ENCODE measurements at regions of chr17 and their contacts with region 1.

Region 1: DNA sequence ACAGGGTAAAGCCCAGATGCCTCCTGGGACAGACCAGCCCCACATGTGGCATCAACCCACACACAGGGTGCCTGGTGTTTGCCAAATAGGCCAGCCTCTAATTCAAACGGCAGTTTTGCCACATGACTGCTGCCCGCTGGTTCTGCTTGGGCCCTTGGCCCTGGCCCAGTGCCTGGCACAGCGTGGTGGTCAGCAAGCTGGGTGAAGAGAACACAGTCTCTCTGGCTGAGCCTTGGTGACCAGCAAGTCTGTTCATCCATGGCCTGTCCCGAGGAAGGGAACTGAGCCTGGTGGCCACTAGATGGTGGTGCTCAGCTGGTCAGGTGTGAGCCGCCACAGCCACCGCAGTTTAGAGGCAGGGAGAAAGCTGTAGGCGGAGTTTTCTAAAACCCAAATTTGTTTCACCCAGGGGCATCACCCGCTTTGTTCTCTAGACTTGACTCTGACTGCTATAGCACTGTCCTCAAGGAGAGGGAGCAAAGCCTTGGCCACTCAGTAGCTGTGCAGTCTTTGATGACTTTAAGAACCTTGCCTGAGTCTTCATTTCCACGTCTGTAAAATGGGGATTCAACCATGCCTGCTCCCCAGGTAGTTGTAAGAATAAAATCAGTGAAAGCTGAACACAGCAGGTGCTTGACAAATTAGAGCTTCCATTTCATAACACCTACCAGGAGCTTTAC is 4.7 kb upstream of the GFAP start:
- DNase-seq: peak; percentile 78 to 79
- H3K4me3 ChIP-seq: no peak overlapping the region
- H3K27ac ChIP-seq: no peak overlapping the region
- H3K4me1 ChIP-seq: no peaks in the 10 kb centered on the region
- H3K27me3 ChIP-seq: no peaks in the 10 kb centered on the region
- CTCF ChIP-seq: peak; percentile 79 to 95 (median 89)
- POLR2A ChIP-seq: no peak

Region 2: GRCh38 chr17:44829523-44830358 is 90.3 kb before region 1 on chr17 and contains the start of gene GJC1:
- intact Hi-C with region 1: no loop called
- DNase-seq: peak; percentile 50 to 60
- H3K4me3 ChIP-seq: peak within 1 kb of the TSS; percentile 49 to 66
- H3K27ac ChIP-seq: peak within 1 kb of the TSS; percentile 98
- H3K4me1 ChIP-seq: no peaks in the 10 kb centered on the region
- H3K27me3 ChIP-seq: no peaks in the 10 kb centered on the region
- CTCF ChIP-seq: no peak
- POLR2A ChIP-seq: peak; percentile 40 to 63
- total RNA-seq, gene GJC1: 10.6 to 79.4 (median 50.2) TPM

Region 3: GRCh38 chr17:45021607-45022287 is 101.7 kb after region 1 on chr17:
- intact Hi-C with region 1: loop called (anchors 5 kb)
- DNase-seq: peak; percentile 52 to 69
- H3K4me3 ChIP-seq: peak overlapping the region; percentile 44 to 46
- H3K27ac ChIP-seq: peak overlapping the region; percentile 80 to 86
- H3K4me1 ChIP-seq: peaks cover 0 to 24% of the 10 kb centered on the region in 2 donors
- H3K27me3 ChIP-seq: no peaks in the 10 kb centered on the region
- CTCF ChIP-seq: peak; percentile 81 to 98 (median 94)
- POLR2A ChIP-seq: peak in 1 of 2 donors; percentile 37

Region 4: GRCh38 chr17:45098869-45099616 is 179.0 kb after region 1 on chr17:
- intact Hi-C with region 1: loop called (anchors 10 kb)
- DNase-seq: peak; percentile 86 to 92
- H3K4me3 ChIP-seq: no peak overlapping the region
- H3K27ac ChIP-seq: peak overlapping the region; percentile 58 to 64
- H3K4me1 ChIP-seq: no peaks in the 10 kb centered on the region
- H3K27me3 ChIP-seq: no peaks in the 10 kb centered on the region
- CTCF ChIP-seq: peak; percentile 82 to 88 (median 86)
- POLR2A ChIP-seq: no peak